Activated B cell treated with CpG ODN at 0.5 μM for 24 hours (primary cell): ENCODE measurements at regions of chr1 and their contacts with region 1.

Region 1: DNA sequence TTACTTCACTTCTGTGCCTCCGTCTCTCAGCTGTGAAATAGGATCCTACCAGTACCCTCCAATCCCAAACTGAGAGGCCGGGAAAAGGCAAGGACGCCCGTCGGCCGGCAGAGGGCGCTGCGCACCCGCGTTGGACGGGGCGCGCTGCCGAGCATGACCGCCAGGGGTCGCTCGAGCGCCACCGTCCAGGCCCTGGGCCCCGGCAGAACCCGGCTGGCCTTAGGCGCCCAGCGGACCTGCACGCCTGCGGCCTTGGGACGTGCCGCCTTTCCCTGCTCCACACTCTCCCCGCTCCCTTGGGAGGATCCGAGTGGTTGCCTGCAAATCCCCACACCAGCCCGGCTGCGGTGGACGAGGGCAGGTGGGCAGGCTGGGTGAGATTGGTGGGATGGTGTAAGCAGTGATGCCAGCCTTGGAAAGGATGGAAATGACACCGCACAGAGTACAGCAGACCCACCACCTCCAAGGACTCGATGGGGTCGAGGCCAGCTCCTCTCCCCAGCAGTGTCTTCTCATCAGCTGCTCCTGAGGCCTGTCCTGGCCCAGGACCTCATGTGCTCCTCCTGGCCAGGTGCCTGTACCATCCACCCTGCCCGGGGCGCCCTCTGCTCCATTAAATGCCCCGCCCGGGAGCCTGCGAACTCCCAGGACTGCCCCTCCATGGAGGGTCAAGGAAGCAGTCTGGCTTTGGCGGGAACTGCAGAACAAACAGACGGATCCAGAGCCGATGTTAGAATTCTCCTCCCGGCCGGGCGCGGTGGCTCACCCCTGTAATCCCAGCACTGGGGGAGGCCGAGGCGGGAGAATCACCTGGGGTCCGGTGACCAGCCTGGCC is 47.4 kb upstream of the LBR start:
- DNase-seq: peak; percentile 84
- ATAC-seq: peak; percentile 83
- H3K4me3 Mint-ChIP-seq: no peak overlapping the region
- H3K27ac Mint-ChIP-seq: no peak overlapping the region
- H3K4me1 Mint-ChIP-seq: peaks cover 40% of the 10 kb centered on the region
- H3K27me3 Mint-ChIP-seq: no peaks in the 10 kb centered on the region
- CTCF ChIP-seq: peak; percentile 100

Region 2: DNA sequence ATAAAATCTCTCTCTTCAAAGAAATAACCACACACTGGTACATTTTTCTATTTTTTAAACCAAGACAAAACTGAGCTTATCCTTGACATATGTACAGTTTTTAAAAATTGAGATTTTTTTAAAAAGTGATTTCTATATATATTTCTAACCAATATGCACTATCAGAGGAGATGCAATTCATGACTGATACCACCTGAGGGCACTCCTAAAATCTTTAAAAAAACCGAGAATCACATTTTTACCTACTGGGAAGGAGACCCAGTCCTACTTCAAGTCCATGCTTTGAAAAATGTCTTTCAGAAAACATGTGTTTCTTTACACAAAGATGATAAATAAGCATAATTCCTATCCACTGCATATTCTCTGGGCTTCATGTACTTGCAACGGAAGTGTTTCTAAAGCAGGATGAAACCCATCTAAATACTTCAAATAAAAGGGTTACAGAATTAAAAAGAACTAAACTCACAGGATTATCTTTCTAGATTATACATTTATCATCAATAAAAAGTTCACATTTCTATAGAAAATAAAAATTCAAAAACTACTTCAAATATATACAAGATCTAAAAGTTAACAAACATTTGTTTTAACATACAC is 79.1 kb after region 1 on chr1:
- CTCF ChIA-PET with region 1: interaction called, 3 read pairs
- POLR2A ChIA-PET with region 1: interaction called, 5 read pairs
- intact Hi-C with region 1: loop called (anchors 1 kb)
- DNase-seq: no peak
- ATAC-seq: no peak
- H3K4me3 Mint-ChIP-seq: no peak overlapping the region
- H3K27ac Mint-ChIP-seq: no peak overlapping the region
- H3K4me1 Mint-ChIP-seq: no peaks in the 10 kb centered on the region
- H3K27me3 Mint-ChIP-seq: peaks cover 4% of the 10 kb centered on the region
- CTCF ChIP-seq: no peak

Region 3: DNA sequence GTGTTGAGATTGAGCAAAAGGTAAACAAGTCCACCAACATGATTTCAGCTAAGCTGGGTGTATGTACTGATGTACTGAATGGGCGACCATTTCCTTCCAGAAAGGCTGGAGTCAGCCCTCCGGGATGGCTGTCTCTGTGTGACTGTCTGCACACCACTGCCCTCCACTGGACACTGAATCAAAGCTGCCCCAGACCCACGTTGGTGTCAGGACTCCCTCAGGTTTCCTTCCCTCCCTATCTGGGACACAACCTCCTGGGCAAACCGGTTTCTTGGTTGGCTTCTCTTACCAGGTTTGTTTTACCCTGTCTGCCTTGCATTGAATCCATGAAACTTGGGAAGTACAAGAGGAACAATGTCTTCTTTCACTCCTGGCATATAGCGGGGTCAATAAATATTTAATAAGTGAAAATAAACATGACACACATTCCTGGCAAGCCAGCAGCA is 297.1 kb after region 1 on chr1:
- CTCF ChIA-PET with region 1: interaction called, 15 read pairs
- POLR2A ChIA-PET with region 1: no interaction called
- intact Hi-C with region 1: loop called (anchors 1 kb)
- DNase-seq: no peak
- ATAC-seq: peak; percentile 59
- H3K4me3 Mint-ChIP-seq: no peak overlapping the region
- H3K27ac Mint-ChIP-seq: no peak overlapping the region
- H3K4me1 Mint-ChIP-seq: peaks cover 7% of the 10 kb centered on the region
- H3K27me3 Mint-ChIP-seq: no peaks in the 10 kb centered on the region
- CTCF ChIP-seq: no peak

Region 4: DNA sequence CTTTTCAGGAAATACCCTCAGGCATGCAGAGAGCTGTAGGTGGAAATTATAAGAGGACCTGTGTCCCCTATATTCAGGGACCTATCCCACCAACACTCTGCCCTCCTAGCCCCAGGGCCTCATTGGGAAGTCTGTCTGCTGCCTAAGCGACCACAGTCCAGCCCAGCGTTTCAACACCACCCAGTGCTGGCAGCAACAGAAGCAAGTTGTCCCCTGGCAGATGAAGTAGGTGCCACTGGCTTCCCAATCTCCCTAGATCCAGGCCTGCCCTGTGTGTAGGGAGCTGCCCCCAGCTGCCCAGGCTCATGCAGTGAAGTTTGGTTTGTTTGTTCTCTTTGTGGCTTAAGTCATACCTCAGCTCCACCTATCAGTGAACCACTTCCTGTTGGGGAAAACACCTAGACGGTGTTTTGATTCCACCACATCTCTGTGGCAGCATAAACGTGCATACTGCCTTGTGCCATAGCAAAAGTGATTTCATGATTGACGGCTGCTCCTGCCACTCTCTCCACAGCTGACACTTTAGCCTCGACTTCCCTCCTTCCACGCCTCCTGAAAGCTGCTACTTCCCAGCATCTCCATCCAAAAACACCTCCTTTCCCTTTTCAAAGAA is 421.8 kb after region 1 on chr1:
- CTCF ChIA-PET with region 1: interaction called, 3 read pairs
- POLR2A ChIA-PET with region 1: no interaction called
- intact Hi-C with region 1: loop called (anchors 1 kb)
- DNase-seq: peak; percentile 34
- ATAC-seq: peak; percentile 99
- H3K4me3 Mint-ChIP-seq: peak overlapping the region; percentile 48
- H3K27ac Mint-ChIP-seq: peak overlapping the region; percentile 95
- H3K4me1 Mint-ChIP-seq: peaks cover 37% of the 10 kb centered on the region
- H3K27me3 Mint-ChIP-seq: no peaks in the 10 kb centered on the region
- CTCF ChIP-seq: no peak

Region 5: GRCh38 chr1:225977937-225978748 is 502.9 kb after region 1 on chr1:
- CTCF ChIA-PET with region 1: interaction called, 9 read pairs
- POLR2A ChIA-PET with region 1: interaction called, 3 read pairs
- intact Hi-C with region 1: loop called (anchors 1 kb)
- DNase-seq: no peak
- ATAC-seq: peak; percentile 79
- H3K4me3 Mint-ChIP-seq: peak overlapping the region; percentile 63
- H3K27ac Mint-ChIP-seq: peak overlapping the region; percentile 81
- H3K4me1 Mint-ChIP-seq: peaks cover 33% of the 10 kb centered on the region
- H3K27me3 Mint-ChIP-seq: no peaks in the 10 kb centered on the region
- CTCF ChIP-seq: no peak

Region 6: GRCh38 chr1:227058321-227058751 is 1583.1 kb after region 1 on chr1:
- CTCF ChIA-PET with region 1: no interaction called
- POLR2A ChIA-PET with region 1: no interaction called
- intact Hi-C with region 1: no loop called
- DNase-seq: no peak
- ATAC-seq: no peak
- H3K4me3 Mint-ChIP-seq: no peak overlapping the region
- H3K27ac Mint-ChIP-seq: no peak overlapping the region
- H3K4me1 Mint-ChIP-seq: no peaks in the 10 kb centered on the region
- H3K27me3 Mint-ChIP-seq: peaks cover 3% of the 10 kb centered on the region
- CTCF ChIP-seq: no peak